ENCODE measurements at regions of chr20 and their contacts with region 1.

Region 1: GRCh38 chr20:51800060-51800794 is 2.1 kb downstream of the SALL4 start:
- DNase-seq: peak; percentile 82 to 100
- H3K4me3 ChIP-seq: peak overlapping the region; percentile 90 to 99 (median 94)
- H3K27ac ChIP-seq: peak overlapping the region; percentile 96
- H3K4me1 ChIP-seq: peaks cover 5 to 14% (median 13%) of the 10 kb centered on the region in 4 experiments
- H3K27me3 ChIP-seq: no peaks in the 10 kb centered on the region
- CTCF ChIP-seq: peak; percentile 81 to 91 (median 88)
- EP300 ChIP-seq: peak in 1 of 2 experiments; percentile 36; a peak in 1 of 3 replicates
- POLR2A ChIP-seq: peak; percentile 61 to 89; a peak in 2 of 3 replicates
- RAD21 ChIP-seq: peak; percentile 71 to 79

Region 2: GRCh38 chr20:51789434-51789833 is 10.8 kb before region 1 on chr20:
- CTCF ChIA-PET with region 1: interaction called, 6 read pairs
- POLR2A ChIA-PET with region 1: interaction called, 23 read pairs
- DNase-seq: no peak
- H3K4me3 ChIP-seq: no peak overlapping the region
- H3K27ac ChIP-seq: no peak overlapping the region
- H3K4me1 ChIP-seq: peaks cover 2 to 7% (median 7%) of the 10 kb centered on the region in 4 experiments; a peak in 6 of 7 replicates
- H3K27me3 ChIP-seq: no peaks in the 10 kb centered on the region
- CTCF ChIP-seq: no peak
- EP300 ChIP-seq: no peak
- POLR2A ChIP-seq: no peak
- RAD21 ChIP-seq: no peak

Region 3: GRCh38 chr20:51966291-51966971 is 166.2 kb after region 1 on chr20:
- CTCF ChIA-PET with region 1: interaction called, 9 read pairs
- POLR2A ChIA-PET with region 1: interaction called, 11 read pairs
- DNase-seq: peak; percentile 68 to 75
- H3K4me3 ChIP-seq: no peak overlapping the region
- H3K27ac ChIP-seq: no peak overlapping the region
- H3K4me1 ChIP-seq: peaks cover 4 to 10% (median 6%) of the 10 kb centered on the region in 4 experiments; a peak in 6 of 7 replicates
- H3K27me3 ChIP-seq: peaks cover 0 to 2% (median 0%) of the 10 kb centered on the region in 4 experiments; a peak in 1 of 7 replicates
- CTCF ChIP-seq: peak; percentile 48 to 90 (median 81)
- EP300 ChIP-seq: no peak
- POLR2A ChIP-seq: no peak
- RAD21 ChIP-seq: peak; percentile 77 to 89

Region 4: DNA sequence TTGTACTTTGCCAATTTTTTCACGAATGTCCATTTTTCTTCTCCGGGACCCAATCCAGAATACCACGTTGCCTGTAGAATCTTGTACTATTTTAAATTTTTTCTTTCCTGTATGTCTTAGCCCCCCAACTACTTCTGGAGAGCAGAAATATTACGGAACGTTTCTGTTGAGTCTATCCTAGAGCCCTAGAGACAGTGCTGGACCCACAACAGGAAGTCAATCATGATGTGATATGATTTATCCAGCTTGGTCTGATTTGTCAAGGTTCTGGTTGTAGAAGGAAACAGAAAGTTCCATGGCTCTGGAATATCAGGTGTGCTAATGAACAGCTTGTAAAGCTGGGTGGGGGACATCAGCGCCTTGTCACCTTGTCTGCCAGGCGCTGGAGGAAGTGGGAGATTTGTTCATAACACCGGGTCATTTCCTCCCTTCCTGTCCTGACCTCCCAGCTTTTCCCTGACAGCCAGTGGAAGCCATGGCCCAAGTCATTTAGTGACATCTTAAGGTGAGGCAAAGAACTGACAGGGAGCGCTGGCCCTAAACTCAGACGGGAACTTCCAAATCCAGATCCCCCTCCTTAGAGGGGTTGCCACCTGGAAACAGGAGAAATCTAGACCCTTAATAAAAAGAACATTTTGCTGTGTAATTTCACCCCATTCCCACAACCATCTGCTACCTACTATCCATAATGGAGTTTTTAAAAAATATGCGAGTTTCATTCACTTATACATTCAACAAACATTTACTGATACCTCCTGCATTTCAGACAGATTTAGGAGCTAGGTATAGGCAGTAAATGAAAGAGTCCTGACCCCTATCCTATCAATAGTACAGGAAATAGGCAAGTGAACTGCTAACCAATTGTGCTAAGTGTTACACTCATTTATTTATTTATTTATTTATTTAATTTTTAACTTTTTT is 260.8 kb after region 1 on chr20:
- CTCF ChIA-PET with region 1: interaction called, 12 read pairs
- POLR2A ChIA-PET with region 1: interaction called, 5 read pairs
- DNase-seq: no peak
- H3K4me3 ChIP-seq: no peak overlapping the region
- H3K27ac ChIP-seq: no peak overlapping the region
- H3K4me1 ChIP-seq: peaks cover 0 to 3% (median under 1%) of the 10 kb centered on the region in 4 experiments; a peak in 2 of 7 replicates
- H3K27me3 ChIP-seq: no peaks in the 10 kb centered on the region
- CTCF ChIP-seq: peak; percentile 63 to 82 (median 76)
- EP300 ChIP-seq: no peak
- POLR2A ChIP-seq: no peak
- RAD21 ChIP-seq: peak; percentile 91 to 94

Region 5: GRCh38 chr20:52104546-52105441 is 304.6 kb after region 1 on chr20:
- CTCF ChIA-PET with region 1: interaction called, 5 read pairs
- POLR2A ChIA-PET with region 1: interaction called, 21 read pairs
- DNase-seq: peak; percentile 25 to 86
- H3K4me3 ChIP-seq: peak overlapping the region; percentile 30 to 77 (median 58)
- H3K27ac ChIP-seq: no peak overlapping the region
- H3K4me1 ChIP-seq: peaks cover 0 to 9% (median 5%) of the 10 kb centered on the region in 4 experiments; a peak in 5 of 7 replicates
- H3K27me3 ChIP-seq: peaks cover 10 to 35% (median 30%) of the 10 kb centered on the region in 4 experiments
- CTCF ChIP-seq: no peak
- EP300 ChIP-seq: no peak
- POLR2A ChIP-seq: no peak; a peak in 2 of 3 replicates
- RAD21 ChIP-seq: no peak